ENCODE measurements at regions of chr3 and their contacts with region 1.

Region 1: DNA sequence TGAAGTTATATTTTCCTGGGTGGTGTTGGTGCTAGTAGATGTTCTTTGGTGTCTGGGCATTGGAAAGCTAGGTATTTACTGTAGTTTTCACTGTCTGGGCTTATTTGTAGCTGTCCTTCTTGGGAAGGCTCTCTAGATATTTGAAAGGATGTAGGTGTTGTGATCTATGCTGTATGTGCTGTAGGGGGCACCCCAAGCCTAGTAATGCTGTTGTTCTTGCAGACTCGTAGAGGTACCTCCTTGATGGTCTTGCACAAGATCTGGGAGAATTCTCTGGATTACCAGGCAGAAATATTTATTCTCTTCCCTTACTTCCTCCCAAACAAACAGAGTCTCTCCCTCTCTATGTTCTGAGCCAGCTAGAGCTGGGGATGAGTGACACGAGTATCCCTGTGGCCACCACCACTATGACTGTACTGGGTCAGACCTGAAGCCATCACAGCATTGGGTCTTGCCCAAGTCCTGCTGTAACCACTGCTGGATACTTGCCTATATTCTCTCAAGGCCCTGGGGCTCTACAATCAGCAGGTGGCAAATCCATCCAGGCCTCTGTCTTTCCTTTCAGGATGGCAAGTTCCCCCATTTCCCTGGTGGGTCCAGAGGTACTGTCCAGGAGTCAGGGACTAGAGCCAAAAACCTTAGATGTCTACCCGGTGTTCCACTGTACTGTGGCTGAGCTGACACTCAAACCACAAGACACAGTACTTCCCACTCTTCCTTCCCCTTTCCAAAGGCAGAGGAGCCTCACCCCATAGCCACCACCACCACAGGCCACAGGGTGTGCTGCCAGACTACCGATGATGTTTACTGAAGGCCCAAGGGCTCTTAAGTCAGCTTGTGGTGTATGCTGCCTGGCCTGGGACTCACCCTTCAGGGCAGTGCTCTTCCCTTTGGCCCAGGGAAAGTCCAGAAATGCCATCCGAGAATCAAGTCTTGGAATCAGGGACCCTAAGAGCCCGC is 195.2 kb upstream of the DPPA4 start:
- DNase-seq: peak in 1 of 2 donors; percentile 36
- ATAC-seq: peak; percentile 44

Region 2: GRCh38 chr3:110314512-110315114 is 782.1 kb after region 1 on chr3:
- intact Hi-C with region 1: loop called in 1 of 2 experiments (anchors 10 kb)
- DNase-seq: peak; percentile 29 to 50
- ATAC-seq: peak; percentile 73